A549 (cell line): ENCODE measurements at regions of chr12 and their contacts with region 1.

Region 1: DNA sequence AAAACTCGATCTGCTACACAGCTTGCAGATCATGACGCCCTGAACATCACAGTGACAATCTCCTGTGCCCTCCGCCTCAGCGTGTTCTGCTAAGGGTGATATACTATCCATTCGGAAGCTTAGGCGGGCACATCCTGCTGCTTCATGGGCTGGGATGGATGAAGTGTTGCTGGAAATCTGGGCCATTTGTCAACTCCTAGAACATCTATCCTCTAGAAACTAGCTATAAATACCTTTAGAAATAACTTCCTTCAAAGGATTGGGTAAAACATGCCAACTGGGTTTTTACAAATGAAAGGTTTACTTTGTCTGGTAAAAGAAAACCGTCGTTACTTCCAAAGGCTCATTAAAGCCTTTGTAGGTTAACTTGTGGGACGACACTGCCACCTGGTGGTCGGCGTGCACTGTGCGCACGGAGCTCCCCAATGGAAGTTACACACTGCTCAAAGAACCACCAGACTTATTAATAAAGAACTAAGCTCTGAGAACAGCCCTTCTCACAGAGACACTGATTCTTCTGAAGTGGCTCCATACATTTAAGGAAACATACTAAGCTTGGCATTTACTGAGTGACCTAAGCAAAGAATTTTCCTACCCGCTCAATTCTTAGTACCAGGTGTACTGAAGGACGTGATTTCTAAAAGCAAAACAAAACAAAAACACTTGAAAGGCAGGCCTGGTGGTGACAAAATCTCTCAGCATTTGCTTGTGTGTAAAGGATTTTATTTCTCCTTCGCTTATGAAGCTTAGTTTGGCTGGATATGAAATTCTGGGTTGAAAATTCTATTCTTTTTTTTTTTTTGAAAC is 21.6 kb upstream of the CACNA2D4 start:
- DNase-seq: peak; percentile 72 to 80
- ATAC-seq: peak; percentile 90 to 94
- H3K4me3 ChIP-seq: no peak overlapping the region
- H3K27ac ChIP-seq: no peak overlapping the region
- H3K4me1 ChIP-seq: peaks cover 17% of the 10 kb centered on the region
- CTCF ChIP-seq: peak; percentile 91
- EP300 ChIP-seq: no peak
- POLR2A ChIP-seq: no peak
- RAD21 ChIP-seq: peak; percentile 93 to 94

Region 2: DNA sequence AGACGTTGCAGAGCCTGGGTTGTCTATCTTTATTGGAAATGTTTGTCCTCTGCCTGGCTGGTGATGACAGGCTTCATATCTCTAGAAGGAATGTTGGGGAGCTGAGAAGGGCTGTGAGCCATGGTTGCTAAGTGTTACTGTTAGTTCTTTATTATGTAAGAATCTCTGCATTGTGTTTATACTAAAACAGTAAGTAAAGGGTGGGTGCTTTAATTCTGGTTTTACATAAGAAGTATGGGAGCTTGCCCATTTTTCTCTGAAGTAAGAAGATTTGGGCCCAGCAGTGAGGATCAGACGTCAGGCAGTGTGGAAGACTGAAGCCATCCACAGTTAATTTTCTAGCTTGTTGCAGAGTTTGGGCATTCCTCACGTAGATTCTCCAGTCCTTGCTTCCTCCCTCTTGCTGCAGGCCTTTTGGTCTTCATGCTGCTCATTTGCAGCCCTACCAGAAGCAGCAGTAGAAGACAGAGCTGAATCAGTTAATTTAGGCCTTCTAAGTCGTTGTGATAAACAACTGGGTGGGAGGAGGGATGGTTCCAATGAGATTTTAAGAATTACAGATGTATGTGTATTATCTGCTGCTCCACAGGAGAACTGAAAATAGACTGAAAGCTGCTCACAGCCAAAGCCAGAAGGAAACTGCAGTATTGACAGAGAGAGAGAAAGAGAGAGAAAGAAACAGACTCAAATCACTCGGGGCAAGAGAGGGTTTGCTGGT is 289.6 kb before region 1 on chr12:
- CTCF ChIA-PET with region 1: interaction called, 27 read pairs
- POLR2A ChIA-PET with region 1: no interaction called
- DNase-seq: no peak
- ATAC-seq: no peak
- H3K4me3 ChIP-seq: no peak overlapping the region
- H3K27ac ChIP-seq: no peak overlapping the region
- H3K4me1 ChIP-seq: no peaks in the 10 kb centered on the region
- CTCF ChIP-seq: no peak
- EP300 ChIP-seq: no peak
- POLR2A ChIP-seq: no peak
- RAD21 ChIP-seq: no peak

Region 3: GRCh38 chr12:1781772-1782171 is 158.2 kb before region 1 on chr12:
- CTCF ChIA-PET with region 1: interaction called, 16 read pairs
- POLR2A ChIA-PET with region 1: no interaction called
- DNase-seq: no peak
- ATAC-seq: no peak
- H3K4me3 ChIP-seq: no peak overlapping the region
- H3K27ac ChIP-seq: no peak overlapping the region
- H3K4me1 ChIP-seq: peaks cover 13% of the 10 kb centered on the region
- CTCF ChIP-seq: no peak
- EP300 ChIP-seq: no peak
- POLR2A ChIP-seq: no peak
- RAD21 ChIP-seq: no peak

Region 4: DNA sequence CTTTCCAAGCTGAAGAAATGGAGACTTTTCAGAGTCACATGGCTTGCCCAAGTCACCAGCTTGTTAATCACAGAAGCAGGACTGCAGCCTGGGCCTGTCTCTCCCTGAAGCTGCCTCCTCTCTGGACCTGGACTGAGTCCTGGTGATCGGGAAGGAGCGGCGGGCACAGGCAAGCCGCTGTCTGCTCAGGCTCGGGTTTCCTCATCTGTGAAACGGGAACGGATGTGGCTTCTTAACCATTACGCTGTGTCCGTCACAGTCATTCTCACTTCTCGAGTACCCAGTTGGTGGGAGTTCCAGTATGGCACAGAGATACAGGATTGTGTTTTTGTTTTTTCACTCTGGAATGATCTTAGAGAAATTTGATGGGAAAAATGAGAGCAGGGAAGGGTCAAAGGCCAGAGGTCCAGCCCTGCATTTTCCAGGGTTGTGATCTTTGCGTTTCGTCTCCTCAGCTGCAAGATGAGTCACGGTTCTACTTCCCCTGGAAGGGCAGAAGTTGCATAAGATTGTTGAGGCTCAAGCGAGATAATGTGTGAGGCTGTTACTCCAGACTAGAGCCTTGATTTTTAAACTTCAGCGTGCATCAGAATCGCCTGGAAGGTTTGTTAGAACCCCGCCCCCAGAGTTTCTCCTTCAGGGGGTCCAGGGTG is 127.2 kb before region 1 on chr12:
- CTCF ChIA-PET with region 1: interaction called, 17 read pairs
- POLR2A ChIA-PET with region 1: no interaction called
- DNase-seq: no peak
- ATAC-seq: peak in 1 of 2 experiments; percentile 29; a peak in 1 of 6 replicates
- H3K4me3 ChIP-seq: no peak overlapping the region
- H3K27ac ChIP-seq: peak overlapping the region in 1 of 2 experiments; percentile 21; a peak in 1 of 6 replicates
- H3K4me1 ChIP-seq: 0 out of 3 replicates have a peak, but pooled peaks cover 3% of the 10 kb centered on the region
- CTCF ChIP-seq: no peak
- EP300 ChIP-seq: no peak
- POLR2A ChIP-seq: no peak
- RAD21 ChIP-seq: no peak

Region 5: DNA sequence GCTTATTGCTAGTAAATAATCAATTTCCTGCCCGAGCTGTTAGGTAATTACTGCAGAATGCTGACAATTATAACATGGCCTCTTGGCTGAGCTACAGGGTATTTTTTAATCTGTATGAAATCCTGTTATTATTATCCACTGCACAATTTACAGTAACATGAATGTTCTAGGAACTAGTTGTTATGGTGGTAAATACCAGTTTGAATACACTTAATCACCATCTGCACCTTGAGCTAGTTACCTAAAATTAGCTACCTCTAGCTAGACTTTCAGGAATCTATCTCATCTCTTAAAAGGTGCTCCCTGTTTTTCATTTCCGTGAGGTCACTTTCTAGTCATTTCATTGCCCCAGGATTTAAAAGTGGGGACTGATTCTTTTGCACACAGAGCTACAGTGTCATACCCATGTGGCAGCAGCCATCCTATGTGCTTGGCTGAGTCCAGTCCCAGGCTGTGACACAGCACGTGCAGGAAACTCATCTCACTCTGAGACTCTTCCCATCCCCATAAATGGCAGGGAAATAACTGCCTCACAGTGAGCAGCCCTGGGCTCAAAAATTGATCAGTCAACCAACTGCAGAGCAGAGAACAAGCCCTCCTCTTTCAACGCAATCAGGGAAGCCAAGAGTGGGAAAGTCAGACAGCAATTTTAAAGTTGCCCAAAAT is 26.7 kb after region 1 on chr12:
- CTCF ChIA-PET with region 1: interaction called, 19 read pairs
- POLR2A ChIA-PET with region 1: no interaction called
- DNase-seq: no peak
- ATAC-seq: no peak
- H3K4me3 ChIP-seq: no peak overlapping the region
- H3K27ac ChIP-seq: no peak overlapping the region
- H3K4me1 ChIP-seq: no peaks in the 10 kb centered on the region
- CTCF ChIP-seq: no peak
- EP300 ChIP-seq: no peak
- POLR2A ChIP-seq: no peak
- RAD21 ChIP-seq: no peak